Caco-2 (cell line): ENCODE measurements at regions of chr7 and their contacts with region 1.

Region 1: GRCh38 chr7:87416682-87417587 is 58.5 kb downstream of the ABCB4 start:
- DNase-seq: peak; percentile 51 to 74
- H3K4me3 ChIP-seq: no peak overlapping the region
- H3K4me3 Mint-ChIP-seq: no peak overlapping the region
- H3K27ac Mint-ChIP-seq: no peak overlapping the region
- H3K4me1 ChIP-seq: peaks cover 27% of the 10 kb centered on the region
- H3K4me1 Mint-ChIP-seq: peaks cover 7% of the 10 kb centered on the region
- H3K27me3 ChIP-seq: no peaks in the 10 kb centered on the region
- H3K27me3 Mint-ChIP-seq: peaks cover 4% of the 10 kb centered on the region
- CTCF ChIP-seq: peak; percentile 50 to 64

Region 2: DNA sequence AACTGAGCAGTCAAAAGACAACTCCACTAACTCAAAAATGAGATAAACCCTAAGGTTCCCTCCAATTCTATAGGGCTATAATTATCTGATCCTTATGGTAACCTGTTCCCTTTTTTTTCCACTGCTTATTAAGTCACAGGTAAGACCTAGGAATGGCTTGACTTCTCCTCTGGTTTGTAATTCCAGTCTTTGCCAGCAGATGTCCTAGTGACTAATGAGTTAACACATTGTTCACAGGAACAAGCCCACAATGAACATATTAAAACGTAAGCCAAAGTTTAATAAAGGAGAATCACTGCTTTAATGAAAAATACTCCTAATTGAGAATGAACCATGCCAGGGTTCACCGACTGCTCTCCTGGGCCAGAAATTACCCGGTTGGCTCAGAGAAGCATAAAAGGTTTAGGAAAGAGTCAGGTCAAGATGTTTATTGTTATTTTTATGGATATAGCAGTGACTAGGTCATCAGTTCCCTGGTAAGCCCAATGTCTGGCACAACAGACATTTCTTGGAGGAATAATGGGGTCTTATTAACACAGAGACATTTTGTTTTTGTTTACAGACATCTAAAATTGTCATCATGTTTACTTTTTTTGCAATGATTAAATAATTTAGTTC is 477.6 kb before region 1 on chr7:
- CTCF ChIA-PET with region 1: no interaction called
- POLR2A ChIA-PET with region 1: no interaction called
- intact Hi-C with region 1: loop called (anchors 2 kb)
- DNase-seq: peak; percentile 41 to 74
- H3K4me3 ChIP-seq: no peak overlapping the region
- H3K4me3 Mint-ChIP-seq: no peak overlapping the region
- H3K27ac Mint-ChIP-seq: no peak overlapping the region
- H3K4me1 ChIP-seq: no peaks in the 10 kb centered on the region
- H3K4me1 Mint-ChIP-seq: no peaks in the 10 kb centered on the region
- H3K27me3 ChIP-seq: no peaks in the 10 kb centered on the region
- H3K27me3 Mint-ChIP-seq: peaks cover 8% of the 10 kb centered on the region
- CTCF ChIP-seq: peak; percentile 60 to 68

Region 3: GRCh38 chr7:87312215-87312865 is 104.6 kb before region 1 on chr7:
- CTCF ChIA-PET with region 1: interaction called, 5 read pairs
- POLR2A ChIA-PET with region 1: no interaction called
- intact Hi-C with region 1: loop called (anchors 1 kb)
- DNase-seq: peak; percentile 56 to 73
- H3K4me3 ChIP-seq: no peak overlapping the region
- H3K4me3 Mint-ChIP-seq: no peak overlapping the region
- H3K27ac Mint-ChIP-seq: no peak overlapping the region
- H3K4me1 ChIP-seq: no peaks in the 10 kb centered on the region
- H3K4me1 Mint-ChIP-seq: peaks cover 5% of the 10 kb centered on the region
- H3K27me3 ChIP-seq: no peaks in the 10 kb centered on the region
- H3K27me3 Mint-ChIP-seq: no peaks in the 10 kb centered on the region
- CTCF ChIP-seq: peak; percentile 95 to 97

Region 4: DNA sequence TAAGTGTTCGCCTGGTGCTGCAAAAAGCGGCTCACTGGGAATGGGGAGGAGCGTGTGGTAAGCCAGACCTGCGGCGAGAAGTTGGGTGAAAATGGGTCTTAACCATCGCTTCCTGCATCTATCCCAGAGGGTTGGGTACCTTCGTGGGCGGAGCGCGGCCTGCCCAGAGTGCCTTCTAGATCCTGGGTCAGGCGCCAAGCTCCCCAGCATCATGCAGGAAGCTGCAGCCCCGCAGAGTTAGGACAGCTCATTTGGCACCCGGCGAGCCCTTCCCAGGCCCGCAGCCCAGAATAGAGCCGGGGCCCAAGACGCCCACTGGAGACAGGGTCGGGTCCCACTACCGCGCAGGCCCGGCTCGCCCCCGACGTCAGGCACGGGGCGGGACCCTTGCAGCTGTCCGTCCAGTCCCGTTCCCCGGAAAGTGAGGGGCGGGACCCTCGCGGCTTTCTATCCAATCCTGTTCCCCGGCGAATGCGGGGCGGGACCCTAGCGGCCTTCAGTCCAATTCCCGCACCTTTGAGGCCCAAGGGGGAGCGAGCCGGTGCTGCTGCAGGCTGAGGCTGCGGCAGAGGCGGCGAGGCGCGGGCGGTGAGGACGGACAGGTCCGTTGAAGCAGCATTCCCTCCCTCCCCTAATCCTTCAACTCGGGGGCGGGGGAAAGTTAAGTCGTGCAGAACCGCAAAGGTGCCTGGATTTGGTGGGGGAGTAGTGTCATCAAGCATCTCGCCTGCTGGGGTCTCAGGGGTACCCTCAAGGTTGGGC is 71.6 kb before region 1 on chr7 and contains the start of gene CROT:
- CTCF ChIA-PET with region 1: no interaction called
- POLR2A ChIA-PET with region 1: no interaction called
- intact Hi-C with region 1: loop called (anchors 1 kb)
- DNase-seq: peak; percentile 96 to 97
- H3K4me3 ChIP-seq: peak within 1 kb of the TSS; percentile 71
- H3K4me3 Mint-ChIP-seq: peak within 1 kb of the TSS; percentile 84
- H3K27ac Mint-ChIP-seq: peak within 1 kb of the TSS; percentile 80
- H3K4me1 ChIP-seq: peaks cover 9% of the 10 kb centered on the region; the same call in 1 of the 2 replicates
- H3K4me1 Mint-ChIP-seq: no peaks in the 10 kb centered on the region
- H3K27me3 ChIP-seq: no peaks in the 10 kb centered on the region
- H3K27me3 Mint-ChIP-seq: no peaks in the 10 kb centered on the region
- CTCF ChIP-seq: no peak
- total RNA-seq, gene CROT: 15.4 and 16.9 TPM in 2 replicates

Region 5: GRCh38 chr7:87506246-87507180 is 89.6 kb after region 1 on chr7:
- CTCF ChIA-PET with region 1: no interaction called
- POLR2A ChIA-PET with region 1: no interaction called
- intact Hi-C with region 1: loop called (anchors 1 kb)
- DNase-seq: no peak
- H3K4me3 ChIP-seq: no peak overlapping the region
- H3K4me3 Mint-ChIP-seq: no peak overlapping the region
- H3K27ac Mint-ChIP-seq: no peak overlapping the region
- H3K4me1 ChIP-seq: no peaks in the 10 kb centered on the region
- H3K4me1 Mint-ChIP-seq: no peaks in the 10 kb centered on the region
- H3K27me3 ChIP-seq: no peaks in the 10 kb centered on the region
- H3K27me3 Mint-ChIP-seq: no peaks in the 10 kb centered on the region
- CTCF ChIP-seq: peak; percentile 11 to 42

Region 6: GRCh38 chr7:87635921-87636320 is 219.0 kb after region 1 on chr7:
- CTCF ChIA-PET with region 1: no interaction called
- POLR2A ChIA-PET with region 1: no interaction called
- intact Hi-C with region 1: no loop called
- DNase-seq: no peak
- H3K4me3 ChIP-seq: no peak overlapping the region
- H3K4me3 Mint-ChIP-seq: no peak overlapping the region
- H3K27ac Mint-ChIP-seq: no peak overlapping the region
- H3K4me1 ChIP-seq: no peaks in the 10 kb centered on the region
- H3K4me1 Mint-ChIP-seq: no peaks in the 10 kb centered on the region
- H3K27me3 ChIP-seq: no peaks in the 10 kb centered on the region
- H3K27me3 Mint-ChIP-seq: no peaks in the 10 kb centered on the region
- CTCF ChIP-seq: no peak